Activated T-helper 2 cell treated with anti-CD3 and anti-CD28 coated beads, Interferon-gamma antibody, Interleukin-2, Interleukin-4, amounts not matched to agents 10 μg/mL and 5 μg/mL and 100 μg/mL, durations not matched to agents 14 hours and 24 hours and 36 hours (primary cell): ENCODE measurements at regions of chr7 and their contacts with region 1.

Region 1: GRCh38 chr7:106659963-106660861 is 746 bp downstream of the CCDC71L start:
- DNase-seq: peak; percentile 82
- H3K4me3 Mint-ChIP-seq: peak overlapping the region; percentile 96
- H3K27ac Mint-ChIP-seq: peak overlapping the region; percentile 93
- H3K4me1 Mint-ChIP-seq: peaks cover 33% of the 10 kb centered on the region
- H3K27me3 Mint-ChIP-seq: no peaks in the 10 kb centered on the region

Region 2: GRCh38 chr7:106176414-106177299 is 483.6 kb before region 1 on chr7:
- intact Hi-C with region 1: loop called (anchors 2 kb)
- DNase-seq: peak; percentile 56
- H3K4me3 Mint-ChIP-seq: no peak overlapping the region
- H3K27ac Mint-ChIP-seq: no peak overlapping the region
- H3K4me1 Mint-ChIP-seq: peaks cover 5% of the 10 kb centered on the region
- H3K27me3 Mint-ChIP-seq: peaks cover 21% of the 10 kb centered on the region

Region 3: GRCh38 chr7:106542550-106543220 is 117.5 kb before region 1 on chr7:
- intact Hi-C with region 1: loop called (anchors 1 kb)
- DNase-seq: peak; percentile 33
- H3K4me3 Mint-ChIP-seq: no peak overlapping the region
- H3K27ac Mint-ChIP-seq: no peak overlapping the region
- H3K4me1 Mint-ChIP-seq: peaks cover 16% of the 10 kb centered on the region
- H3K27me3 Mint-ChIP-seq: no peaks in the 10 kb centered on the region

Region 4: DNA sequence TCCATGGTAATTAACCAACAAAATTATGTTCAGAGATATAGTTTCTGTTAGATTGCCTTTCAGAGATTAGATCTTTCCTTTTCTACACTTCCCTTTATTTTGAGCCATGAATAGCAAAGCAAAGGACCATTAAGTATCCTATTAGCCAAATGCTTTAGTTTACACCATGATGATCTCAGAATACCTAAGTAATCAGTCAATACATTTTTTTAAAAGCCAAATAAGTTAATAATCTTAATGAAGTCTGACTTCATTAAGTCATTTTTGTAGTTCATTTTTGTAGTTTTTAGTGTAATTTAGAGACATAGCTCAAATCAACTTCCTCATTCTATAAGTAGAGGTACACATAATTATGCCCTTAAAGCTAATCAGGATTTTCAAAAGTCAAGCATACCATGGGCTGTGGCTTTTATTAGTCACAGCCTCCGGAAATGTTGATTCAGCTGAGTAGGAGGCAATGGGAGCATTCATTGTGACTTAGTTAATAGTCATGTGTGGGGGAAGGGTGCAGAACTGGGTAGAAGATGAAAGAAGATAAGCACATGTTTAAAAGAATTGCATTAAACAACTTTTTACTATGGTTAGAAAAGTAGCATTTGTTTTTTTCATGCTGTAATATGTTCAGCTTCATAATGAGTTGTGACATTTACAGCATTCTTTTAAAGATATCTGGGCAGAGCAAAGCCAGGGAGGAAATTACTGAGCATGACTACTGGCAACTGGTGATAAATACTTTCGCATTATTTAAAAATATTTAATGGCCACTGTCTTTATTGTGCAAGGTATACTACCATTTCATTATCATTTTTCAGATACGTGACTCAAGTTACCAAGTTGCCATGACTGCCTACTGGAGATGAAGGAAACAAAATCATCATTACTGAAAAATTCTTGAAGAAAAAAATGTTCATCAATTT is 58.0 kb after region 1 on chr7:
- intact Hi-C with region 1: loop called (anchors 1 kb)
- DNase-seq: peak; percentile 56
- H3K4me3 Mint-ChIP-seq: no peak overlapping the region
- H3K27ac Mint-ChIP-seq: no peak overlapping the region
- H3K4me1 Mint-ChIP-seq: peaks cover 30% of the 10 kb centered on the region
- H3K27me3 Mint-ChIP-seq: no peaks in the 10 kb centered on the region

Region 5: DNA sequence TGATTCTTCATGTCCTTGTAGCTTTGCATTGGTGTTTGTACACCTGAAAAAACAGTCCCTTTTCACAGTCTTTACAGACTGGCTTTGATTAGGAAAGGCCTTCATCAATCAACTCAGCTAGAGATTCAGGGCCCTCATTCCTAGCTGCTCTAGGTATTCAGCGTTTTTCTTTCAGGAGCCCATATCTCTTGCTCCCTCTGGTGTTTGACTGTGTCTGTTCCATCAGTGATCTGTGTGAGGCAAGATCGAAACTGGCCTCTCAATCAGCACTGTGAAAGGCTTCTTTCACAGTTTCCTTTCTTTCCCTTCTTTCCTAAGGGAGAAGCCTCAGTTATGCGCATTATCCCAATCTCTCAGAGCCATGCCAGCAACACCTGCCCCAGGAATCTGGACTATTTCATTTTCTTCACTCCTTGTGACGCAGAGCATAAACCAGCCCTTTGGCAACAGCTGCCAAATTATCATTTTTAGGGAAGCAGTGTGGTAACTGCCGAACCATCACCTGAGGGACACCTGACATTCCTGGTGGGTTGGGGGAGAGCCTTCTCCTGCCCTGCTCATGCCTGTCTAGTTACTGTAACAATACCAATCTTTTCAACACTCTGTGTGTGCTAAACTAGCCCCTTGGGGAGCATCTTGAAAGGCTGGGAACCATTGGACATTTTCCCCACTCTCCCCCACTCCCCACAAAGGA is 76.4 kb after region 1 on chr7:
- intact Hi-C with region 1: loop called (anchors 1 kb)
- DNase-seq: peak; percentile 43
- H3K4me3 Mint-ChIP-seq: no peak overlapping the region
- H3K27ac Mint-ChIP-seq: no peak overlapping the region
- H3K4me1 Mint-ChIP-seq: peaks cover 41% of the 10 kb centered on the region
- H3K27me3 Mint-ChIP-seq: no peaks in the 10 kb centered on the region

Region 6: GRCh38 chr7:106774768-106775551 is 114.7 kb after region 1 on chr7:
- intact Hi-C with region 1: loop called (anchors 1 kb)
- DNase-seq: no peak
- H3K4me3 Mint-ChIP-seq: no peak overlapping the region
- H3K27ac Mint-ChIP-seq: peak overlapping the region; percentile 14
- H3K4me1 Mint-ChIP-seq: peaks cover 36% of the 10 kb centered on the region
- H3K27me3 Mint-ChIP-seq: no peaks in the 10 kb centered on the region

Region 7: DNA sequence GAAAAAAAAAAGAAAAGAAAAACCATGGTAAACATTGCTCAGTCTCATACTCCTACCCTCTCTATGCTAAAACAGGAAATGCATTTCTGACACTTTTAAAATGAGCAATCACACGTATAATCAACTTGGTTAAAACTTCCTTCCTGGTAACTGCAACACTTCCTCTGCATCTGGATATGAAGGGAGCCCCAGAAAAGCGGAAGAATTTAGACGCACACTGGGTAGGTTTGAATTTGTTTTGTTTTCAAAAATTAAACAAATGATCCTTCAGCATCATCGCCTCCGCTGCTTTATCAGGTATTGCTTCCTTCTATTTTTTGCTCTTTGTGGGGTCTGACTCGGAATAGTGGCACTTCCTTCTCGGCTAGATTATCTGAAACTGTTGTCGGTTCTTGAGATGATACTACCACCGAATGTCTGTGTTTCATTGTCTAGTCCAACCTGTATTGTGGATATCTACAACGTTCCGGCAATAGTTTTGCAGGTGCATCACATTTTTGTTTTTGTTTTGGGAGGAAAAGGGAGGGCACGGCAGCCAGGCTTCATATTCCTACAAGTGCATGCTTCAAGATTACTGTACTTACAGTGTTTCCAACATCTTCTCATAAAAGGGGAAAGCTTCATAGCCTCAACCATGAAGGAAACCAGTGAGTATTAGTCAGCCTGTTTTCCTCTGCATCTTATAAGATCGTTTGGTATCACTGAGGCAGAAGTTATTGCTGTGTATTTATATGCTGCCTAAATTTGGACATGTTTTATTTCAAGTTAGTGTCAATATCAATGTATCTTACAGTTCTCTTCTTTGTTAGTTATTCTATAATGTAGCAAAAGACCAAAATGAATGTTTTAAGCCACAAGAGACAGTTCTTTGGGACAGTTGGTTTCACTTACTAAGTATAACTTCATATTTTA is 205.2 kb after region 1 on chr7 and contains the start of gene PIK3CG:
- intact Hi-C with region 1: loop called (anchors 5 kb)
- DNase-seq: peak; percentile 16
- H3K4me3 Mint-ChIP-seq: peak within 1 kb of the TSS; percentile 91
- H3K27ac Mint-ChIP-seq: peak within 1 kb of the TSS; percentile 85
- H3K4me1 Mint-ChIP-seq: peaks cover 41% of the 10 kb centered on the region
- H3K27me3 Mint-ChIP-seq: no peaks in the 10 kb centered on the region
- total RNA-seq, gene PIK3CG: 36.6 and 36.7 TPM in 2 replicates

Region 8: GRCh38 chr7:106944035-106944665 is 283.9 kb after region 1 on chr7:
- intact Hi-C with region 1: no loop called
- DNase-seq: no peak
- H3K4me3 Mint-ChIP-seq: no peak overlapping the region
- H3K27ac Mint-ChIP-seq: no peak overlapping the region
- H3K4me1 Mint-ChIP-seq: no peaks in the 10 kb centered on the region
- H3K27me3 Mint-ChIP-seq: peaks cover 14% of the 10 kb centered on the region